Dorsolateral prefrontal cortex (tissue), 120 donors: ENCODE measurements at regions of chr1 and their contacts with region 1.

Region 1: GRCh38 chr1:7667625-7668218 is 103.4 kb upstream of the VAMP3 start:
- DNase-seq: peak; percentile 91 to 99 (median 95)
- H3K4me3 ChIP-seq: peak overlapping the region in 16 of 59 donors; percentile 1 to 43 (median 20)
- H3K27ac ChIP-seq: peak overlapping the region; percentile 72 to 99 (median 97)
- H3K27me3 ChIP-seq: no peaks in the 10 kb centered on the region
- CTCF ChIP-seq: peak; percentile 99 to 100 (median 100)

Region 2: DNA sequence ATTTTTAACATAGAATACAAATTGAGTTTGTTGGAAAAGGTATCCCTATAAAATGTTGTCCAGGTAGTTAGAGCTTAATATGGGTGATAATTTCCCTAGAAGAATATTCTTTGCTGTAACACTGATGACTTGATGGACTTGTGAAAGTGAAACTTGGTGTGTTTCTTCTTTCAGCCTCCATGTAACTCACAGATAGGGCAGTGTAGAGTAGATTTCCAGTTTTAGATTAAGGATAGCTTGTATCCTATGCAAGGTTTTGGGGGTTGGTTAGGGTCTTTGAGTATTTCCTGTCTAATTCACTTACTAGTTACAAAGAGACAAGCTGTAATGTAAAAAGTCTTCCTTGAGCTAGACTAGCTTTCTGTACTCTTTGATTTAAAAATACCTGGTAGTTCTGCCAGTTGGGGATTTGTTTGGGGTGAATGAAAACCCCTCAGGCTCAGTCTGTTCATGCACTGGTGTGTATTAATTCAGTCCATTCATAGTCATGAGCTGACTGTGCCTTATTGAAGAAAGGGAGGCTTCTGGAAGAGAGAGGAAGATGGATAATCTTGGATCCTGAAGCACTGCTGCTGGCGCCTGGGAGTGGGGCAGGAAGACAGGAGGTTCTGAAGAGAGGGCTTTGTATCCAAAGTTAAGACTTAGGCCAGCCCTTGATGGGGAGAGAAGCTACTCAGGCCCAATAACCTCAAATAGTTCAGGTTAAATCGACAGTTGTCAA is 798.9 kb before region 1 on chr1:
- intact Hi-C with region 1: no loop called
- DNase-seq: no peak
- H3K4me3 ChIP-seq: peak overlapping the region in 25 of 59 donors; percentile 0 to 56 (median 16)
- H3K27ac ChIP-seq: peak overlapping the region in 48 of 59 donors; percentile 0 to 74 (median 49)
- H3K27me3 ChIP-seq: no peaks in the 10 kb centered on the region
- CTCF ChIP-seq: no peak

Region 3: DNA sequence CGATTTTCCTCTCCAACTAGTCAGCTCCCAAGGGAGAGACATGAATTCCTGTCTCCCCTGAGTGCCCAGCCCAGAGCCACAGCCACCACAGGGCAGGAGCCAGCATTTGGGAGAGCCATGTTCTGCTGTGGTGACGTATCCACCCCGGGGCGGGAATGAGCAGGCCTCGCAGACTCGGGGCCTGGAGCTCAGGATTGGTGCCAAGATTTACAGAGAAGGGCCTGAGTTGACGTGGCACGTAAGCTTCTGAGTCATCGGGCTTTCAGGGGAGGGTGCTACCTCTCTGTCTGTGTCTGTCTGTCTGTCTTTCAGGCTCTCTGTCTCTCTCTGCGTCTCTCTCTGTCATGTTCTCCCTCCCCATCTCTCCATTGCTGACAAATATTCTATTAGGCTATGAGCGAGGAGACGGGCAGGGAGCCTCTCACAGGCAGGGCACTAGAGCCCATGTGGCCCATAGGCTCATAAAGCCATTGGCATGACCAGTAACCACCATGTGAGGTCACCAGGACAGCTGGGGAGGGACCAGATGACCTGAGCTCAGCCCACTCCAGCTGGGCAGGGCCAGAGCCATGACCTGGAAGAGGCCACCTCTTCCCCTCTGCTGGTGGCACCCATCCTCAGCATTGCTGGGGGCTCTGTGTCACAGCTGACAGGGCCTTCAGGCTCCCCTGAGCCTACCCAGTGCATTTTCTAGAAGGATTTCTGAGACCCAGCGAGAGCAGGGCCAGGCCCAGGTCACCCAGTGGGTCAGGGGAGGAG is 196.7 kb before region 1 on chr1:
- intact Hi-C with region 1: no loop called
- DNase-seq: no peak
- H3K4me3 ChIP-seq: no peak overlapping the region
- H3K27ac ChIP-seq: no peak overlapping the region
- H3K27me3 ChIP-seq: no peaks in the 10 kb centered on the region
- CTCF ChIP-seq: no peak

Region 4: GRCh38 chr1:7680207-7680954 is 12.7 kb after region 1 on chr1:
- intact Hi-C with region 1: loop called in 1 of 2 experiments (anchors 1 kb)
- DNase-seq: peak; percentile 53 to 83 (median 69)
- H3K4me3 ChIP-seq: peak overlapping the region; percentile 65 to 91 (median 77)
- H3K27ac ChIP-seq: peak overlapping the region; percentile 51 to 97 (median 92)
- H3K27me3 ChIP-seq: no peaks in the 10 kb centered on the region
- CTCF ChIP-seq: peak in 9 of 56 donors; percentile 4 to 32 (median 13)

Region 5: DNA sequence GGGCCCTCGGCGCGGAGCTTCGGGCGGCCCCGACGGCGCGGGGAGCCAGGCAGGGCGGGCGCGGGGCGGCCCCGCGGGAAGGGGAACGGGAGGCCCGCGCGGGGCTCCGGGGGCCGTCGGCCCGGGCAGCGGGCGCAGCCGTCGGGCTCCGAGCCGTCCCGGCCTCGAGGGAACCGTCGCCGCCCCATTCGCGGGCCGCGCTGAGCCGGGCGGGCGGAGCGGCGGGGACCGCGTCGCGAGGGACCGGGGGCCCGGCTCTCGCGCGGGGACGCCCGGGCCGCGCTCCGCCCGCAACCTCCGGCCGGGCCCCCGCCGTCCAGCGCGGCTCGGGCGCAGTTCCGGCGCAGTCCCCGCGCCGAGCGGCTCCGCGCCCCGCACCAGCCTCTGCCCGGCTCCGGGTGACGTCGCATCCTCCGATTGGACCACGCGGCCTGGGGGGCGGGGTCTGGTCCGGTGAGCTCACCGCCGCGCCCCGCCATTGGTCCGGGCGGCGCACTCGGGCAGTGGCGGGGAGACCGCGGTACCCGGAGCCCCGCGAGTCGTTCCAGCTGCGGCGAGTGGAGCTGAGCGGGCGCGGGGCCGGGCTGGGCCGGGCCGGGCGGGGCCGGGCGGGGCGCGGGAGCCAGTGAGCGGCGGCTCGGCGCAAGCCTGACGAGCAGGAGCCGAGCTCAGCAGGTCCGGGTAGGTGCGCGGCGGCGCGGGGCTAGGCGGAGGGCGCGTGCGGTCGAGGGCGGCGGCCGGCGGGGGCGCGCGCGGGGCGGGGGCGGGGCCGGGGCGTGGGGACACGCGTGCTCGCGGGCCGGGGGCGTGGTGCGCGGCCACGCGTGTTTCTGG is 36.7 kb after region 1 on chr1:
- intact Hi-C with region 1: loop called (anchors 5 kb)
- DNase-seq: peak; percentile 93 to 99 (median 96)
- H3K4me3 ChIP-seq: peak overlapping the region in 58 of 59 donors; percentile 52 to 83 (median 72)
- H3K27ac ChIP-seq: peak overlapping the region in 40 of 59 donors; percentile 47 to 90 (median 84)
- H3K27me3 ChIP-seq: no peaks in the 10 kb centered on the region
- CTCF ChIP-seq: no peak

Region 6: DNA sequence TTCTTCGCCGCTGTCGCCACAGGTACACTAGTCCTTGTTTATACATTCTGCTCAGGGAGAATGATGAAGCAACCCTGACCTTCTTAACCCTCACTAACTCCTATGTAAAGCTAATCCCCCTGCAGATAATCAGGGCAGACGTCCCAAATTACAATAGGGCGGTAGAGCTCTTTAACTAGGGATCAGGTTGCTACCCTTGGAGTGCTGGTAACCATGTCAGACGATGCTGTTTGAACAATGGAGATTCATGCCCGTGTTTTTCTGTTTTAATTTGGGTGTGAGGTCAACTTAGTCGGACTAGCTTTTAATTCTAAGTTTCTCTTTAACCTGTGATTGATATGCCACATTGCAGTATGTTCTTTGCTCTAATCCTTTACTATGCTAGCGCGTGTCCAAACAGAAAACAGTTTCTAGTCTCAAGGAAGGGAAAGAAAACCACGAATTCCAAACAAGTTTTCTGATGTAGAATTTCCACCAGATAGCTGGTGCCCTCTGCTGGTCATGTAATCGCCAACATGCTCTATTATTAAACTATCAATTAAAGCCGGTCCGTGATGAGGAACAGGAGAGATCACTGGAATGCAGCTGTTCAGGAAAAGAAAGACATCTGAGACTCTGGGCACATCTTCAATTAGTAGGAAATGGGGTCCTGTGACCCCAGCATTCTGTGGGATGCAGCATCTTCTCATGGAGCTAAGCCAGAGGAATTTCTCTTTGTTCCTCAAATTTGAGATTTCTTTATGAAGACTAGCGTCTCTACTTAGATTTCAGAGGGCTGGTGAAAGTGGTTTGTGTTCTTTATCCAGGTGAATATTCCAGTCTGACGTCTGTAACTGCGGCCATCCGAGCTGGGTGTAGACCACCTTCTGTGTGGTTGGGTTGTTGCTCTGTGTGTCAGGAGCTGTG is 85.0 kb after region 1 on chr1:
- intact Hi-C with region 1: loop called (anchors 1 kb)
- DNase-seq: peak in 6 of 10 donors; percentile 48 to 82 (median 67)
- H3K4me3 ChIP-seq: peak overlapping the region in 51 of 59 donors; percentile 1 to 54 (median 31)
- H3K27ac ChIP-seq: peak overlapping the region in 53 of 59 donors; percentile 1 to 84 (median 61)
- H3K27me3 ChIP-seq: no peaks in the 10 kb centered on the region
- CTCF ChIP-seq: peak; percentile 79 to 98 (median 90)

Region 7: DNA sequence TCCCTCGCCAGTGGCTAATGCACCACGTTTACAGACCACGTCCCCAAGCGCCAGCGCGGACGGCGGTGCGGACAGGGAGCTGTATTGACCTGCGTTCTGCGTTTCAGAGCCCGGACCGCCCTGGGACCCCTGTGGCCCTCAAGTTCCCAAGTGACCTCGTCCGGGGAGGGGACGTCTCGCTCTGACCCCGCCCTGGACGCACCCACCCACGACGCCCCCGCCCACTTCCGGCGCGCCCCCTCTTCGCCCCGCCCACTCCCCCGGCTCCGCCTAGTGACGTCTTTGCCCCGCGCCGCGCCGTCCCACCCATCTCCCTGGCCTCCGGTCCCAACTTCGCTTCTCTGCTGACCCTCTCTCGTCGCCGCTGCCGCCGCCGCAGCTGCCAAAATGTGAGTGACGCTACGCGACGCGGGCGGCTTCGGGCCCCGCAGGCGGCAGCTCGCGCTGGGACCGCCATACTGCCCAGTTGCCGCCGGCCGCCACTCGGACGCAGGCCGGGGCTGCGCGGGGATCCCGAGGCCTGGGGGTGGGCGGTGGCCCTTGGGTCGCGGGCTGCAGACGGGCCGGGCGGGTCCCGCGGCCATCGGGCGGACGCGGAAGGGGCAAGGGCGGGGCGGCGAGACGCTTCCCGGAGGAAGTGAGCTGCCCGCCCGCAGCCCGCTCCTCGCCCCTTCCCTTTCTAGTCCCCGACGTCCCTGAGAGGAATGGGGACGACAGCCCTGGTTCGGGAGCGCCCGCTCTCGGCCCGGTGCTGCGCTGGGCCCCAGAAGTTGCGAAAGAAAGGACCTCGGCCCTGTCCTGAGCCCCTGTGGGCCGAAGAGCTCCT is 103.5 kb after region 1 on chr1 and contains the start of gene VAMP3:
- intact Hi-C with region 1: no loop called
- DNase-seq: peak; percentile 72 to 92 (median 86)
- H3K4me3 ChIP-seq: peak within 1 kb of the TSS; percentile 72 to 98 (median 90)
- H3K27ac ChIP-seq: peak within 1 kb of the TSS; percentile 72 to 97 (median 92)
- H3K27me3 ChIP-seq: no peaks in the 10 kb centered on the region
- CTCF ChIP-seq: peak in 11 of 56 donors; percentile 10 to 37 (median 18)
- total RNA-seq, gene VAMP3: 51.7 to 189 (median 84.7) TPM

Region 8: DNA sequence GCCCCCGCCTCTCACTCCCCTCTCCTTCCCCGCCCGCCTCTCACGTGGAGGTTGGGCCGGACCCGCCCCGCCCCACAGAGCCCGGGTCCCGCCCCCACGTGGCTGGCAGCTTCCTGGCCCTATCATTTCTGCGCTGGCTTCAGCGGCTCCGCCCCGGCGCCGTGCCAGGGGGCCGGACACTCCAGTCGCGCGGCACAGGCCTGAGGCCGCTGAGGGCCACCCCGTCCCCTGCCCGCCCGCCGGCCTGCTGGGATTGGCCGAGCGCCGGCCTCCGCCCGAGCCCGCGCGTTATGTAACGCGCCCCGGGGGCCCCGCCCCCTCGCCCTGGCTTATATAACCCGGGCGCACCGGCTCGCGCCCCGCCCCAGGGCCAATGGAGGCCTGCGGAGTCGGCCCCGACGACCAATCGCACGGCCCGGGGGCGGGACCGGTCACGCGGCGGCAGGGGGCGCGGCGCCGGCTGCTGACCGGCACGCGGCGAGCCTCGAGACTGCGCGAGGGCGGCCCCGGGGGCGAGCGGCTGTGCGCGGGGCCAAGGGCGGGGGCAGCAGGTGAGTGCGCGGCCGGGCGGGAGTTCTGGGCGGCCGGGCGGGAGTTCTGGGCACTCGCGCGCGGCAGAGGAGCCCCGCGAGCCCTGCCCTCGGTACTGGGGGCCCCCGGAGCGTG is 116.2 kb after region 1 on chr1 and contains the start of gene PER3:
- intact Hi-C with region 1: loop called in 1 of 2 experiments (anchors 1 kb)
- DNase-seq: peak; percentile 95 to 100 (median 98)
- H3K4me3 ChIP-seq: peak within 1 kb of the TSS; percentile 66 to 96 (median 85)
- H3K27ac ChIP-seq: peak within 1 kb of the TSS; percentile 67 to 99 (median 95)
- H3K27me3 ChIP-seq: no peaks in the 10 kb centered on the region
- CTCF ChIP-seq: no peak
- total RNA-seq, gene PER3: 31.2 to 79.2 (median 50.5) TPM

Region 9: GRCh38 chr1:7902478-7903085 is 234.9 kb after region 1 on chr1:
- intact Hi-C with region 1: loop called (anchors 1 to 5 kb)
- DNase-seq: peak; percentile 28 to 74 (median 56)
- H3K4me3 ChIP-seq: peak overlapping the region in 39 of 59 donors; percentile 5 to 51 (median 35)
- H3K27ac ChIP-seq: peak overlapping the region in 1 of 59 donors; percentile 31
- H3K27me3 ChIP-seq: no peaks in the 10 kb centered on the region
- CTCF ChIP-seq: peak; percentile 34 to 80 (median 70)